Transverse colon (tissue), 4 donors: ENCODE measurements at regions of chr1 and their contacts with region 1.

Region 1: GRCh38 chr1:230797942-230798418 is 50.8 kb downstream of the CAPN9 start:
- DNase-seq: peak; percentile 41
- H3K4me3 ChIP-seq: no peak overlapping the region
- H3K27ac ChIP-seq: no peak overlapping the region
- H3K4me1 ChIP-seq: no peaks in the 10 kb centered on the region
- H3K27me3 ChIP-seq: no peaks in the 10 kb centered on the region
- CTCF ChIP-seq: peak; percentile 44 to 59 (median 52)
- EP300 ChIP-seq: no peak
- POLR2A ChIP-seq: no peak

Region 2: DNA sequence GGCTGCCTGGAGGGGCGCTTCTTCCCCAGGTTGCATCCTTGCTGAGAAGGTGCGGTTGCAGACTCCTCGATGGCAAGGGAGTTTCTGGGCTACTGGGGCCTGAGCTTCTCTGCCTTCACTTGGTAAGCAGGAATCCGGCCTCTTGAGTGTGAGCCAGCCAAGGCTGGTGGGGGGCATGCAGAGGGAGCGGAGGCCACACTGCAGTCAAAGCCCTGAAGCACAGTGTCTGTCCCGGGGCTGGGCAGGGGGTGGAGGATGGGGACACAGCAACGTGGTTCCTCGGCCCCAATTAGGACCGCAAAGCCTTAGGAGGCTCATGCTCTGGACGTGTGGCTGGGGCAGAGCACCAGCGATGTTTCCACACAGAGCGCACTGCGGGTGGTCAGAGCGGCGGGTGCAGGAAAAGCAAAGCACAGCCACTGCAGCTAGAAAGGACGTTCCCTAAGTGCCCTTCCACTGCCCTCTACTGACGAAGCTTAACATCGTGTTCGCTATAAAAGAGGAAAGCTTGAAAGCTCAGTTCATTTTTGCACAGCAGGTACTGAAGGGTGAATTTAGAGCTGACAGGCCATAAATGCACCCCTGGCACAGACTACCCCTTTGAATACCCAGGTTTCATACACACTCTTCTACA is 216.4 kb before region 1 on chr1:
- in situ Hi-C with region 1: no loop called
- intact Hi-C with region 1: no loop called
- DNase-seq: no peak
- H3K4me3 ChIP-seq: no peak overlapping the region
- H3K27ac ChIP-seq: no peak overlapping the region
- H3K4me1 ChIP-seq: peaks cover 0 to 8% (median 5%) of the 10 kb centered on the region in 4 donors
- H3K27me3 ChIP-seq: no peaks in the 10 kb centered on the region
- CTCF ChIP-seq: no peak
- EP300 ChIP-seq: no peak
- POLR2A ChIP-seq: no peak

Region 3: GRCh38 chr1:230917284-230918135 is 119.5 kb after region 1 on chr1:
- in situ Hi-C with region 1: loop called in 2 of 4 experiments (anchors 25 kb)
- intact Hi-C with region 1: loop called (anchors 2 kb)
- DNase-seq: peak; percentile 86
- H3K4me3 ChIP-seq: no peak overlapping the region
- H3K27ac ChIP-seq: no peak overlapping the region
- H3K4me1 ChIP-seq: no peaks in the 10 kb centered on the region
- H3K27me3 ChIP-seq: no peaks in the 10 kb centered on the region
- CTCF ChIP-seq: peak; percentile 60 to 79 (median 75)
- EP300 ChIP-seq: no peak
- POLR2A ChIP-seq: no peak

Region 4: DNA sequence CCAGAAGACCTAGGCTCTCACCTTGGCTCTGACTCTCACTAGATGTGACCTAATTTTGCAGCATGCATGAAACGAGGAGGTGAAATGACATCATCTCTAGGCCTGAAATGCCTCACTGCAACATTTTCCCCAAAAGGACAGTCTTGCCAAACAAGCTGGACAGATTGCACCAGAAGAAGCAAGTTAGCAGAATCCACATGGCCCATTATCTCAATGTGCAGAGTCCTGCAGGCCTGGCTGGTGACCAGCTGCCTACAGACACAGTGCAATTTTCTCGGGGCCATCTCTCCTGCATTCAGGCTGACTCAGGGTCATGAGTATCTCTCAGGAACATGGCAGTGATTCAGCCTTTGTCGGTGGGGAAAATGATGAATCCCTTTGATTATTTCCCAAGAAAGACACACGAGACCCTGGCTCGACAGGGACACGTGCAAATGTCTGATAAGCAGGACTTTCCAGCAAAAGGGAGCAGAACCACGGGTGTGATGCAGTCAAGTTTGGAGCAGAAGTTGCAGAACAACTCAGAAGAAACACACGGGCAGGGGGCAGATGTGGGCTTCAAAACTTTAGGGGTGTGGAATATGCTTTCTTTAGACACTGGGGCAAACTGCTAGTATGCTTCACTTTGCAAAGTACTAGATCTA is 402.5 kb after region 1 on chr1:
- in situ Hi-C with region 1: loop called in 3 of 4 experiments (anchors 25 kb)
- intact Hi-C with region 1: loop called (anchors 10 kb)
- DNase-seq: no peak
- H3K4me3 ChIP-seq: no peak overlapping the region
- H3K27ac ChIP-seq: no peak overlapping the region
- H3K4me1 ChIP-seq: no peaks in the 10 kb centered on the region
- H3K27me3 ChIP-seq: peaks cover 12% of the 10 kb centered on the region
- CTCF ChIP-seq: no peak
- EP300 ChIP-seq: no peak
- POLR2A ChIP-seq: no peak

Region 5: GRCh38 chr1:231211005-231211857 is 413.3 kb after region 1 on chr1:
- in situ Hi-C with region 1: loop called in 3 of 4 experiments (anchors 25 kb)
- intact Hi-C with region 1: loop called (anchors 10 kb)
- DNase-seq: peak; percentile 94
- H3K4me3 ChIP-seq: peak overlapping the region; percentile 5 to 51 (median 40)
- H3K27ac ChIP-seq: peak overlapping the region; percentile 38 to 68 (median 56)
- H3K4me1 ChIP-seq: peaks cover 0 to 7% (median 6%) of the 10 kb centered on the region in 4 donors
- H3K27me3 ChIP-seq: no peaks in the 10 kb centered on the region
- CTCF ChIP-seq: peak; percentile 87 to 93 (median 89)
- EP300 ChIP-seq: no peak
- POLR2A ChIP-seq: no peak